ENCODE measurements at regions of chr11 and their contacts with region 1.

Region 1: DNA sequence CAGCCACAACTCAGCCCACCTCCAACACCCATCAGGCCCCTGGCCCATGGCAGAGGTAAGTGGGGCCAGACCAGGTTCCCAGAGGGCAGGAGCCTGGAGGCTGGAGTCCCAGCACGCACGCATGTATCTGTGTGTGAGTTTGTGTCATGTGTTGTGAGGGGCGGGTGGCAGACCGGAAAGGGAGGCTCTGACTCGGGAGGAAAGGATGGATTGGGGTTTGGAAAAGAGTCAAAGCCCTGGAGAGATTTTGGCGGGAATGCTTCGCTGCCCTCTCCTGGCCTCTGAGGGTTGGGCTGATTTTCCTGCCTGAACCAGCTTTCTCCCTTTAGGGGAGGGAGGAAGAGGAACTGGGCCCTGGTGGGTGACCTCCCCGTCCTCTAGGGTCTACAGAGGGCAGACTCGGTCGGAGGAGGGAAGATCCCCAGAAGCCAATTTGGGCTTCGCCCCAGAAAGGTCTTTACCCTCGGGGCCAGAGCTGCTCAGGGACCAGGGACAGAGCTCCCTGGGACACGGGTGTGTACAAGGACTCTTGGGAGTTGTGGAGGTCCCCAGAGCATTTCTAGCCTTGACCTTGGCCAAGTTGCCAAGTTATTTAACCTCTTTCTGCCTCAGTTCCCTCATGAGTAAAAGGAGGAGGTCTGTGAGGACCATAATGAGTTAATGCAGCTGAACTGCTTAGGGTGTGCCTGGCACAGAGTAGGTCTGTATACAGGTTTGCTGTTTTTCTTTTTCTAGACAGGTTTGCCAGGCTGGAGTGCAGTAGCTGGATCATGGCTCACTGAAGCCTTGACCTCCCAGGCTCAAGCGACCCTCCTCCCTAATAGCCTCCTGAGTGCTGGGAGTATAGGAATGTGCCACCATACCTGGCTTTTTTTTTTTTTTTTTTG is 6.9 kb downstream of the C11orf68 start:
- DNase-seq: peak; percentile 90
- H3K4me3 ChIP-seq: no peak overlapping the region
- H3K27ac ChIP-seq: peak overlapping the region; percentile 53
- H3K4me1 ChIP-seq: peaks cover 34% of the 10 kb centered on the region
- H3K27me3 ChIP-seq: no peaks in the 10 kb centered on the region
- CTCF ChIP-seq: peak; percentile 63

Region 2: GRCh38 chr11:65743928-65744698 is 167.8 kb before region 1 on chr11:
- CTCF ChIA-PET with region 1: interaction called, 11 read pairs
- POLR2A ChIA-PET with region 1: no interaction called
- intact Hi-C with region 1: no loop called
- DNase-seq: peak; percentile 62
- H3K4me3 ChIP-seq: no peak overlapping the region
- H3K27ac ChIP-seq: no peak overlapping the region
- H3K4me1 ChIP-seq: no peaks in the 10 kb centered on the region
- H3K27me3 ChIP-seq: peaks cover 12% of the 10 kb centered on the region
- CTCF ChIP-seq: peak; percentile 61

Measured in A673 (cell line).